ENCODE measurements at regions of chr6 and their contacts with region 1.

Region 1: DNA sequence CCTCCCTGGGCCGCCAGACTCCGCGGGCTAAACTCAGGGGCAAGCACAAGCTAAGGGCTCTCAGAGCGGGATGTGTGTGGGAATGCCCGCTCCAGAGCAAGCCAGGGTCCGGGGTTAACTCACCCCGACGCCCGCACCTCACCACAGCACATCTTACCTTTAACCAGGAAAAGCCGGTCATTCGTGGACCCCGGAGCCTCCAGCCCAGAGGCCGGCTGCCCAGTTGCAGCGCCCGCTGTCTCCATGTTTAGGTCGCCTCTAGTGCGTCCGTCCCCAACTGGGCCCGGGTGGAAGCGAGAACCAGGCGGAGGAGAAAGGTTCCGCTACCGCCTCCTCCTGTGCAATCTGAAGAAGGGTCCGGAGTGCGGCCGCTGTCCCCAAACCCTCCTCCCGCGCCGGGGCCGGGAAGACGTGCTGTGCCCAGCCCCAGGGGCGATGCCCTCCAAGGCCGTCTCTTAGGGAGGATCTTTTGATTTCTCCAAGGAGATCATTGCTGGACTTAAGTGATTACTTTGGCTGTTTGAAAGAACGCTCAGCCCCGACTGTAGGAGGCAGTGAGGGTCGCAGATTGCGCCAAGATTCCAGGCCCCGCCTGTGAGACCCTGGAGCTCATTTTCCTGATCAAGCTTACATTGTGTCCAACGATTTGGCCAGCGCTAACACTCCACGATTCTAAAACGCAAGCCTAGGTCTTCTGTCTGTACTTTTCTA is at the start of gene TMEM242:
- DNase-seq: peak; percentile 92 to 94
- H3K4me3 ChIP-seq: peak within 1 kb of the TSS; percentile 72
- H3K4me3 Mint-ChIP-seq: peak within 1 kb of the TSS; percentile 87
- H3K27ac Mint-ChIP-seq: peak within 1 kb of the TSS; percentile 93
- H3K4me1 ChIP-seq: peaks cover 14% of the 10 kb centered on the region; the same call in 1 of the 2 replicates
- H3K4me1 Mint-ChIP-seq: peaks cover 9% of the 10 kb centered on the region
- H3K27me3 ChIP-seq: no peaks in the 10 kb centered on the region
- H3K27me3 Mint-ChIP-seq: no peaks in the 10 kb centered on the region
- CTCF ChIP-seq: peak; percentile 13 to 43
- total RNA-seq, gene TMEM242: 12.1 and 12.6 TPM in 2 replicates

Region 2: GRCh38 chr6:157281570-157281969 is 41.8 kb before region 1 on chr6:
- CTCF ChIA-PET with region 1: no interaction called
- POLR2A ChIA-PET with region 1: no interaction called
- intact Hi-C with region 1: no loop called
- DNase-seq: peak in 1 of 2 experiments; percentile 42
- H3K4me3 ChIP-seq: no peak overlapping the region
- H3K4me3 Mint-ChIP-seq: no peak overlapping the region
- H3K27ac Mint-ChIP-seq: no peak overlapping the region
- H3K4me1 ChIP-seq: no peaks in the 10 kb centered on the region
- H3K4me1 Mint-ChIP-seq: no peaks in the 10 kb centered on the region
- H3K27me3 ChIP-seq: no peaks in the 10 kb centered on the region
- H3K27me3 Mint-ChIP-seq: no peaks in the 10 kb centered on the region
- CTCF ChIP-seq: peak; percentile 8 to 23

Region 3: GRCh38 chr6:157379656-157380454 is 56.4 kb after region 1 on chr6:
- CTCF ChIA-PET with region 1: interaction called, 5 read pairs
- POLR2A ChIA-PET with region 1: interaction called, 8 read pairs
- intact Hi-C with region 1: loop called (anchors 2 kb)
- DNase-seq: peak; percentile 88
- H3K4me3 ChIP-seq: peak overlapping the region; percentile 98
- H3K4me3 Mint-ChIP-seq: peak overlapping the region; percentile 83
- H3K27ac Mint-ChIP-seq: no peak overlapping the region
- H3K4me1 ChIP-seq: peaks cover 7% of the 10 kb centered on the region; the same call in 1 of the 2 replicates
- H3K4me1 Mint-ChIP-seq: peaks cover 31% of the 10 kb centered on the region
- H3K27me3 ChIP-seq: no peaks in the 10 kb centered on the region
- H3K27me3 Mint-ChIP-seq: no peaks in the 10 kb centered on the region
- CTCF ChIP-seq: no peak

Region 4: GRCh38 chr6:157405986-157406385 is 82.6 kb after region 1 on chr6:
- CTCF ChIA-PET with region 1: no interaction called
- POLR2A ChIA-PET with region 1: no interaction called
- intact Hi-C with region 1: no loop called
- DNase-seq: no peak
- H3K4me3 ChIP-seq: no peak overlapping the region
- H3K4me3 Mint-ChIP-seq: no peak overlapping the region
- H3K27ac Mint-ChIP-seq: no peak overlapping the region
- H3K4me1 ChIP-seq: no peaks in the 10 kb centered on the region
- H3K4me1 Mint-ChIP-seq: no peaks in the 10 kb centered on the region
- H3K27me3 ChIP-seq: no peaks in the 10 kb centered on the region
- H3K27me3 Mint-ChIP-seq: no peaks in the 10 kb centered on the region
- CTCF ChIP-seq: no peak

Region 5: GRCh38 chr6:157424491-157425020 is 101.1 kb after region 1 on chr6:
- CTCF ChIA-PET with region 1: interaction called, 3 read pairs
- POLR2A ChIA-PET with region 1: interaction called, 4 read pairs
- intact Hi-C with region 1: loop called (anchors 2 kb)
- DNase-seq: peak; percentile 77 to 82
- H3K4me3 ChIP-seq: 0 out of 2 replicates have a peak overlapping the region, but pooled peaks have one; percentile 5
- H3K4me3 Mint-ChIP-seq: peak overlapping the region; percentile 63
- H3K27ac Mint-ChIP-seq: peak overlapping the region; percentile 92
- H3K4me1 ChIP-seq: peaks cover 29% of the 10 kb centered on the region
- H3K4me1 Mint-ChIP-seq: peaks cover 56% of the 10 kb centered on the region
- H3K27me3 ChIP-seq: no peaks in the 10 kb centered on the region
- H3K27me3 Mint-ChIP-seq: no peaks in the 10 kb centered on the region
- CTCF ChIP-seq: peak in 1 of 2 experiments; percentile 17

Region 6: GRCh38 chr6:157456524-157457082 is 133.2 kb after region 1 on chr6:
- CTCF ChIA-PET with region 1: no interaction called
- POLR2A ChIA-PET with region 1: no interaction called
- intact Hi-C with region 1: loop called (anchors 10 kb)
- DNase-seq: no peak
- H3K4me3 ChIP-seq: no peak overlapping the region
- H3K4me3 Mint-ChIP-seq: no peak overlapping the region
- H3K27ac Mint-ChIP-seq: no peak overlapping the region
- H3K4me1 ChIP-seq: peaks cover 6% of the 10 kb centered on the region; the same call in 1 of the 2 replicates
- H3K4me1 Mint-ChIP-seq: peaks cover 16% of the 10 kb centered on the region
- H3K27me3 ChIP-seq: no peaks in the 10 kb centered on the region
- H3K27me3 Mint-ChIP-seq: no peaks in the 10 kb centered on the region
- CTCF ChIP-seq: no peak

Measured in Caco-2 (cell line).